Heart left ventricle (tissue), 16 donors: ENCODE measurements at regions of chr9 and their contacts with region 1.

Region 1: DNA sequence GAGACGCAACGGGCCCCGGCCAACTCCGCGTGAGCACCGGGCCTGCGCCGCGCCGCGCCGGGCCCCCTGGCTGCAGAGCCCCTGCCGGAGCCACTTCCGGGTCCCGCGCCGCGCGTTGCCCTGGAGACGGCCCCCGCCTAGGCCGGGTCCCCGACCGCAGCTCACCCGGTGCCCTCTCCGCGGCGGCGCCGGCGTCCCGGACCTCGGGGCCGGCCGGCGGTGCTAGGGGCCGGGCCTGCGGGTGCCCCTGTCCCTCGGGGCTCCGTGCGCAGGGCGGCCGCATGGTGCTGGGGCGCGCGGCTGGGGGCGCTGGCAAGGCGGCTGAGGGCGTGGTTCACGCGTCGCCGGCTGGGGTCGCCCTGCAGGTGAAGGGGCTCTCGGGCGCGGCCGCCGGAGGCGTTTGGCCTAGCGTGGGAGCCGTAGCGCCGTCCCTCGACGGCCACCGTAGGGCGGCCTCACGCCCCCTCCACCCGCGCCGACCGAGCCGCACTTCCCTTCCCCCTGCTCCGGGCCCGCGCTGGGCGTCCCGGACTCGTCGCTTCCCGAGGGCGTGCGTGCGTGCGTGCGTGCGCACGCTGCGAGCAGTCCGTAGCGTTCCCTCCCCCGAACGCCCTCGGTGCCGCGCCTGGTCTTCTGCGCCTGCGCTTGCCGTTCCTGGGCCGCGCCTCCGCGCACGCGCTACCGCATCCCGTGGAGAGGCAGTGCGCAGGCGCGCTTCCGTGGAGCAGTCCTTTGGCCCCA is at the start of gene TMEM250:
- DNase-seq: peak; percentile 97 to 99 (median 98)
- ATAC-seq: peak; percentile 90 to 93 (median 91)
- H3K4me3 ChIP-seq: peak within 1 kb of the TSS; percentile 75 to 99 (median 90)
- H3K27ac ChIP-seq: peak within 1 kb of the TSS; percentile 89 to 100 (median 97)
- H3K4me1 ChIP-seq: peaks cover 3 to 41% (median 27%) of the 10 kb centered on the region in 12 donors
- H3K27me3 ChIP-seq: no peaks in the 10 kb centered on the region
- CTCF ChIP-seq: peak in 6 of 12 donors; percentile 5 to 26 (median 15)
- POLR2A ChIP-seq: peak in 1 of 2 donors; percentile 89
- total RNA-seq, gene TMEM250: 15.5 to 34.3 (median 19.9) TPM

Region 2: GRCh38 chr9:135602789-135603481 is 515.6 kb before region 1 on chr9:
- intact Hi-C with region 1: loop called in 7 of 10 experiments (anchors 5 to 10 kb)
- DNase-seq: peak in 3 of 5 donors; percentile 21 to 46 (median 25)
- ATAC-seq: peak; percentile 26 to 50 (median 26)
- H3K4me3 ChIP-seq: no peak overlapping the region
- H3K27ac ChIP-seq: no peak overlapping the region
- H3K4me1 ChIP-seq: no peaks in the 10 kb centered on the region
- H3K27me3 ChIP-seq: peaks cover 0 to 13% (median 2%) of the 10 kb centered on the region in 9 donors
- CTCF ChIP-seq: peak; percentile 61 to 87 (median 70)
- POLR2A ChIP-seq: no peak

Region 3: GRCh38 chr9:135797507-135798262 is 320.8 kb before region 1 on chr9:
- intact Hi-C with region 1: loop called in 5 of 10 experiments (anchors 5 to 10 kb)
- DNase-seq: peak in 4 of 5 donors; percentile 52 to 58 (median 55)
- ATAC-seq: peak; percentile 66 to 89 (median 81)
- H3K4me3 ChIP-seq: no peak overlapping the region
- H3K27ac ChIP-seq: peak overlapping the region in 5 of 12 donors; percentile 13 to 60 (median 27)
- H3K4me1 ChIP-seq: peaks cover 0 to 17% (median 11%) of the 10 kb centered on the region in 12 donors
- H3K27me3 ChIP-seq: no peaks in the 10 kb centered on the region
- CTCF ChIP-seq: peak; percentile 52 to 77 (median 64)
- POLR2A ChIP-seq: no peak

Region 4: DNA sequence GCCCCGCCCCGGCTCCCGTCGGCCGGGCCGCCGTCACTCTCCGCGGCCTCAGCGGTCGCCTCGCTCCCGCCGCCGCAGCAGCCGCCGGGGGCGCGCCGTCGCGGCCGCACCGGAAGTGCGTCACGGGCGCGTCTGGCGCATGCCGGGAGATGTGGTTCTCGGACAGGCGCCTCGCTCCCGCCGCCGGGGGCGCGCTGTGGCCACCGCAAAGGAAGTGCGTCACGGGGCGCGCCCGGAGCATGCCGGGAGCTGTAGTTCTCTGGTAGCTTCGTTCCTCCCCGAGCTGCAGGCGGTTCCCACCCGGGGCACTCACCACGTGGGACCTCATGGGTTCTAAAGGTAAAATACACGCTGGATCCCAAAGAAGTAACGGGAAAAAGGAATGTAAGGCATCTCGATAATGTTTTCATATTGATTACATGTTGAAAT is 157.2 kb before region 1 on chr9 and contains the start of gene UBAC1:
- intact Hi-C with region 1: loop called in 1 of 10 experiments (anchors 2 kb)
- DNase-seq: peak; percentile 96 to 98 (median 97)
- ATAC-seq: peak; percentile 89 to 93 (median 92)
- H3K4me3 ChIP-seq: peak within 1 kb of the TSS; percentile 44 to 100 (median 89)
- H3K27ac ChIP-seq: peak within 1 kb of the TSS; percentile 82 to 99 (median 94)
- H3K4me1 ChIP-seq: peaks cover 2 to 47% (median 33%) of the 10 kb centered on the region in 12 donors
- H3K27me3 ChIP-seq: no peaks in the 10 kb centered on the region
- CTCF ChIP-seq: peak; percentile 30 to 68 (median 42)
- POLR2A ChIP-seq: peak in 1 of 2 donors; percentile 46
- total RNA-seq, gene UBAC1: 71.1 to 115 (median 87.6) TPM

Region 5: DNA sequence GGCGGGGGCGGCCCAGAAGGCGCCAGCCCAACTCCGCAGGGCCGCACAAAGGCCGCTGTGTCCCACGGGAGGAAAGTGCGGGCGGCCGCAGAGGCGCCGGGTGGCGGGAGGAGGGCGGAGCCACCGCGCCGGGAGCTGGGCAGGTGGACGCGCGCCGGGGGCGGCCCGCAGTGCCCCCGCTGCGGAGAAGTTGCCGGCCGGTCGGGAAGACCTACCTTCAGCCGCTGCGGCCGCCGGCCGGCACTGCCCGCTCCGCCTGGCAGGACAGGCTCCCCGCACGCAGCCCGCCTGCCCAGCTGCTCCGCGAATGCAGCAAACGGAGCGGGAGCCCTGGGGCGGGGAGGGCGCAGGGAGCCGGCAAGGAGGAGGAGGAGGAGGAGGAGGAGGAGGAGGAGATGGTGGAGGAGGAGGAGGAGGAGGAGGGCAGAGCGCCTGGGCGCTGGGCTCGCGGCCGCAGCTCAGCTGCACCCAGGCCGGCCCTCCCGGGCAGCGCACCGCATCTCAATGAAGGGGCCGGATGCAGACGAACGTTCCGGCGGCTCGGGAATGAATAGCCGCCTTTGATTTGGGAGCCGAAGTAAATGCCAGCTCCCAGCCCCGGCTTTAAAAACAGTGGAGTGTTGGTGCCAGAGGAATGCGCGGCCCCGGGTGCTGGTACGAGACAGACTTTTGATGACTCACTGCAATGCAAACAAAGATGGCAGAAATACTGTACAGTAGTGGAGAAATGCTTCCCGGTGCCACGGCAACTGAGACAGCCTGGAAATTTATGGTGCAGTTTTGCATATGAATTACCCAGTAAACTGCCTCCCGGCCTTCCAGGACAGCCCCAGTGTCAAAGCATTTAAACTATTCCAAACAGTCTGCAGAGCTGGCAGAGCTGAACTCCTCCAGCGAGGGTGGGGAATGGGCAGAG is 66.7 kb before region 1 on chr9:
- intact Hi-C with region 1: loop called in 1 of 10 experiments (anchors 5 kb)
- DNase-seq: peak in 4 of 5 donors; percentile 57 to 72 (median 62)
- ATAC-seq: peak; percentile 24 to 66 (median 37)
- H3K4me3 ChIP-seq: peak overlapping the region; percentile 29 to 63 (median 53)
- H3K27ac ChIP-seq: peak overlapping the region; percentile 32 to 88 (median 80)
- H3K4me1 ChIP-seq: peaks cover 6 to 85% (median 60%) of the 10 kb centered on the region in 12 donors
- H3K27me3 ChIP-seq: no peaks in the 10 kb centered on the region
- CTCF ChIP-seq: no peak
- POLR2A ChIP-seq: no peak